ENCODE measurements at regions of chr3 and their contacts with region 1.

Region 1: GRCh38 chr3:173584093-173584837 is 186.7 kb downstream of the NLGN1 start:
- DNase-seq: peak; percentile 84
- H3K4me3 ChIP-seq: peak overlapping the region; percentile 62 to 99 (median 99)
- H3K27ac ChIP-seq: peak overlapping the region; percentile 64
- H3K4me1 ChIP-seq: peaks cover 5% of the 10 kb centered on the region
- H3K27me3 ChIP-seq: no peaks in the 10 kb centered on the region
- CTCF ChIP-seq: peak; percentile 54 to 72
- POLR2A ChIP-seq: no peak

Region 2: GRCh38 chr3:173639098-173639497 is 54.8 kb after region 1 on chr3:
- CTCF ChIA-PET with region 1: no interaction called
- POLR2A ChIA-PET with region 1: no interaction called
- dilution Hi-C with region 1: no loop called
- intact Hi-C with region 1: no loop called
- DNase-seq: no peak
- H3K4me3 ChIP-seq: no peak overlapping the region
- H3K27ac ChIP-seq: no peak overlapping the region
- H3K4me1 ChIP-seq: no peaks in the 10 kb centered on the region
- H3K27me3 ChIP-seq: no peaks in the 10 kb centered on the region
- CTCF ChIP-seq: no peak
- POLR2A ChIP-seq: no peak

Region 3: GRCh38 chr3:173891272-173892100 is 307.2 kb after region 1 on chr3:
- CTCF ChIA-PET with region 1: no interaction called
- POLR2A ChIA-PET with region 1: no interaction called
- dilution Hi-C with region 1: no loop called
- intact Hi-C with region 1: loop called (anchors 5 kb)
- DNase-seq: peak; percentile 17
- H3K4me3 ChIP-seq: no peak overlapping the region
- H3K27ac ChIP-seq: no peak overlapping the region
- H3K4me1 ChIP-seq: peaks cover 21% of the 10 kb centered on the region
- H3K27me3 ChIP-seq: no peaks in the 10 kb centered on the region
- CTCF ChIP-seq: no peak
- POLR2A ChIP-seq: no peak

Region 4: GRCh38 chr3:174098671-174099070 is 514.4 kb after region 1 on chr3:
- CTCF ChIA-PET with region 1: no interaction called
- POLR2A ChIA-PET with region 1: no interaction called
- dilution Hi-C with region 1: no loop called
- intact Hi-C with region 1: loop called (anchors 10 kb)
- DNase-seq: no peak
- H3K4me3 ChIP-seq: no peak overlapping the region
- H3K27ac ChIP-seq: no peak overlapping the region
- H3K4me1 ChIP-seq: no peaks in the 10 kb centered on the region
- H3K27me3 ChIP-seq: no peaks in the 10 kb centered on the region
- CTCF ChIP-seq: no peak
- POLR2A ChIP-seq: no peak

Region 5: GRCh38 chr3:174440741-174441587 is 856.7 kb after region 1 on chr3:
- CTCF ChIA-PET with region 1: no interaction called
- POLR2A ChIA-PET with region 1: no interaction called
- dilution Hi-C with region 1: no loop called
- intact Hi-C with region 1: loop called (anchors 2 kb)
- DNase-seq: peak; percentile 90
- H3K4me3 ChIP-seq: peak overlapping the region; percentile 74 to 91 (median 78)
- H3K27ac ChIP-seq: peak overlapping the region; percentile 90
- H3K4me1 ChIP-seq: peaks cover 21% of the 10 kb centered on the region
- H3K27me3 ChIP-seq: no peaks in the 10 kb centered on the region
- CTCF ChIP-seq: no peak
- POLR2A ChIP-seq: peak; percentile 39

Measured in endothelial cell of umbilical vein (primary cell).